CD8-positive, alpha-beta T cell (primary cell): ENCODE measurements at regions of chr6 and their contacts with region 1.

Region 1: GRCh38 chr6:33391278-33391921 is at the start of gene KIFC1:
- DNase-seq: peak; percentile 98 to 100 (median 99)
- ATAC-seq: peak; percentile 87
- H3K4me3 ChIP-seq: peak within 1 kb of the TSS; percentile 57 to 61
- H3K4me3 Mint-ChIP-seq: peak within 1 kb of the TSS; percentile 85
- H3K27ac ChIP-seq: peak within 1 kb of the TSS; percentile 68 to 88
- H3K27ac Mint-ChIP-seq: peak within 1 kb of the TSS; percentile 97
- H3K4me1 ChIP-seq: peaks cover 18% of the 10 kb centered on the region
- H3K4me1 Mint-ChIP-seq: peaks cover 25% of the 10 kb centered on the region
- H3K27me3 ChIP-seq: no peaks in the 10 kb centered on the region
- H3K27me3 Mint-ChIP-seq: no peaks in the 10 kb centered on the region
- CTCF ChIP-seq: peak; percentile 86
- total RNA-seq, gene KIFC1: 1.6 to 2.1 TPM

Region 2: GRCh38 chr6:33271458-33272274 is 119.7 kb before region 1 on chr6 and contains the starts of genes RPS18 and VPS52:
- CTCF ChIA-PET with region 1: no interaction called
- POLR2A ChIA-PET with region 1: interaction called, 6 read pairs
- intact Hi-C with region 1: loop called (anchors 1 kb)
- DNase-seq: peak; percentile 82 to 99 (median 90)
- ATAC-seq: peak; percentile 85
- H3K4me3 ChIP-seq: peak within 1 kb of the TSS; percentile 74 to 82
- H3K4me3 Mint-ChIP-seq: peak within 1 kb of the TSS; percentile 100
- H3K27ac ChIP-seq: peak within 1 kb of the TSS; percentile 87 to 95
- H3K27ac Mint-ChIP-seq: peak within 1 kb of the TSS; percentile 100
- H3K4me1 ChIP-seq: peaks cover 44% of the 10 kb centered on the region
- H3K4me1 Mint-ChIP-seq: peaks cover 62% of the 10 kb centered on the region
- H3K27me3 ChIP-seq: no peaks in the 10 kb centered on the region
- H3K27me3 Mint-ChIP-seq: no peaks in the 10 kb centered on the region
- CTCF ChIP-seq: no peak
- total RNA-seq, gene RPS18: 4,154 to 4,290 TPM
- total RNA-seq, gene VPS52: 72.2 to 75.9 TPM

Region 3: DNA sequence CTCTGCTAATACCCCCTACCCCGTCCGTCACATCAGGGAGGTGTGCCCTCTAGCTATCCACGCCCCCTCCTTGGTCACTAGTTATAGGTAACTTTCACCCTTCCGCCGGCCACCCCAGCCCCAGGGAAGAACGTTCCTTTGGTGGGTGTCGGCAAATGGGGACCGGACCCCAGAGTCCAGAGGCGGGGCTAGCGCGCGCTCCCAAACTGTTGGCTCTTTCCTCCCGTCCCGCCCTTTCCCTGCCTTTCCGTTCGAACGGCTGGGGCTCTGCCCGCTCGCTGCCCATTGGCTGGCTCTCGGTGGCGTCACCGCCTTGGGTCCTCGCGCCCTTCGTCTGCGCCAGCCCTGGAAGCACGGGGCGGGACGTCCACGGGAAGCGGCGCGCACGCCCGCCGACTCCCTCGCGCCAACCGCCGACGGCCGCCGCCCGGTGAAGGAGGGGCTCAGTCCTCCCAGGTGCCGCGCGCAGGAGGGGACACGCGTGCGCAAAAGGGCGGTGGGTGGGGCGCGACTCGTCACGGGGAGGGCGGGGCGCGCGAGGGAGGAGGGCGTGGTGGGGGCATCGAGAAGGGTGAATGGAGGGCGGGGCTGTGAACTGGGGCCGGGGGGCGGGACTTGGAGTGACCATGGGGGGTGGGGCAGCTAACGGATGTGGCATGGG is 18.8 kb after region 1 on chr6:
- CTCF ChIA-PET with region 1: interaction called, 6 read pairs
- POLR2A ChIA-PET with region 1: no interaction called
- intact Hi-C with region 1: loop called (anchors 1 kb)
- DNase-seq: peak; percentile 93 to 99 (median 99)
- ATAC-seq: peak; percentile 68
- H3K4me3 ChIP-seq: peak overlapping the region; percentile 82 to 95
- H3K4me3 Mint-ChIP-seq: peak overlapping the region; percentile 88
- H3K27ac ChIP-seq: peak overlapping the region; percentile 94 to 96
- H3K27ac Mint-ChIP-seq: peak overlapping the region; percentile 91
- H3K4me1 ChIP-seq: peaks cover 40% of the 10 kb centered on the region
- H3K4me1 Mint-ChIP-seq: peaks cover 47% of the 10 kb centered on the region
- H3K27me3 ChIP-seq: no peaks in the 10 kb centered on the region
- H3K27me3 Mint-ChIP-seq: no peaks in the 10 kb centered on the region
- CTCF ChIP-seq: no peak

Region 4: GRCh38 chr6:33454009-33454946 is 62.9 kb after region 1 on chr6 and contains the start of gene ZBTB9:
- CTCF ChIA-PET with region 1: interaction called, 7 read pairs
- POLR2A ChIA-PET with region 1: interaction called, 3 read pairs
- intact Hi-C with region 1: loop called (anchors 1 kb)
- DNase-seq: peak; percentile 86 to 96 (median 93)
- ATAC-seq: peak; percentile 98
- H3K4me3 ChIP-seq: peak within 1 kb of the TSS; percentile 92 to 93
- H3K4me3 Mint-ChIP-seq: peak within 1 kb of the TSS; percentile 98
- H3K27ac ChIP-seq: peak within 1 kb of the TSS; percentile 75 to 81
- H3K27ac Mint-ChIP-seq: peak within 1 kb of the TSS; percentile 97
- H3K4me1 ChIP-seq: peaks cover 23% of the 10 kb centered on the region
- H3K4me1 Mint-ChIP-seq: peaks cover 43% of the 10 kb centered on the region
- H3K27me3 ChIP-seq: no peaks in the 10 kb centered on the region
- H3K27me3 Mint-ChIP-seq: no peaks in the 10 kb centered on the region
- CTCF ChIP-seq: no peak
- total RNA-seq, gene ZBTB9: 7.1 to 9.5 TPM

Region 5: DNA sequence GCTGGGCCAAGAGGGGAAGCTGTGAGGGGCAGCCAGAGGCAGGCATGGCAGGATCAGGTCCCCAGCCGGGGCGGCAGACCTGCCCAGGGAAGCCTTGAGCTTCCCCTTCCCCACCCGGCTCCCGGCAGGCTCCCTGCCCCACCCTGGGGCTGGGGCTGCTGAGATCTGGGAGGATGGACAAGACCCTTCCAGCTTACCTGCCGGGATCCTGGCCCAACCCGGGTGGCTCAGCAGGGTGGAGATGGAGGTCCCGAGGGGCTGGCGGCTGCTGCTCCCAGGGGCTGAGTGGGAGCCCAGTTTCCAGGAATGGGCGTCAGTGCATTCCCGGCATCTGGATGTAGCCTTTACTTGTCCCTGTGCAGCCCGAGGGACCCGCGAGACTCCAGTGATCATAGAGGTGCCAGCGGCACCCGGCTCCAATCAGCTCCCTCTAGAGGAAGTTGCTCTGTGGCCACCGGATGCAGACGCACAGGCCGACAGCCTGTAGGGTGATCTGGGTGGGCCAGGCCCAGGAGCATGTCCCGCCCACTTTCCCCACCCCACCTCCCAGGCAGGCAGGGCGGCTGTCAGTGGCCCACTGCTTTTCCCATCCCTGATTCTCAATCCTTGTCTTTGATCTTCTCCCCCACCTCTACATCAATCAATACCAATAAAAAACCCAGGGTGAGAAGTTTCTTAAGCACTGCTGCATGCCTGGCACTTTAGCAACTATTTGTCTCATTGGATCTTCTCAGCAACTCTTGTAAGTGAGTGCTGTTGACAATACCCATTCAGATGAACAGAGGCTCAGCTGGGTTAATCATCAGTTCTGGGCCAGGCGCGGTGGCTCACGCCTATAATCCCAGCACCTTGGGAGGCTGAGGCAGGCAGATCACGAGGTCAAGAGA is 188.7 kb after region 1 on chr6 and contains the start of gene BAK1:
- CTCF ChIA-PET with region 1: no interaction called
- POLR2A ChIA-PET with region 1: no interaction called
- intact Hi-C with region 1: loop called (anchors 1 kb)
- DNase-seq: peak; percentile 59 to 94 (median 85)
- ATAC-seq: peak; percentile 94
- H3K4me3 ChIP-seq: peak within 1 kb of the TSS; percentile 97 to 98
- H3K4me3 Mint-ChIP-seq: peak within 1 kb of the TSS; percentile 93
- H3K27ac ChIP-seq: peak within 1 kb of the TSS; percentile 85 to 87
- H3K27ac Mint-ChIP-seq: peak within 1 kb of the TSS; percentile 98
- H3K4me1 ChIP-seq: peaks cover 29% of the 10 kb centered on the region
- H3K4me1 Mint-ChIP-seq: peaks cover 31% of the 10 kb centered on the region
- H3K27me3 ChIP-seq: no peaks in the 10 kb centered on the region
- H3K27me3 Mint-ChIP-seq: no peaks in the 10 kb centered on the region
- CTCF ChIP-seq: peak; percentile 44
- total RNA-seq, gene BAK1: 44.8 to 46.5 TPM

Region 6: DNA sequence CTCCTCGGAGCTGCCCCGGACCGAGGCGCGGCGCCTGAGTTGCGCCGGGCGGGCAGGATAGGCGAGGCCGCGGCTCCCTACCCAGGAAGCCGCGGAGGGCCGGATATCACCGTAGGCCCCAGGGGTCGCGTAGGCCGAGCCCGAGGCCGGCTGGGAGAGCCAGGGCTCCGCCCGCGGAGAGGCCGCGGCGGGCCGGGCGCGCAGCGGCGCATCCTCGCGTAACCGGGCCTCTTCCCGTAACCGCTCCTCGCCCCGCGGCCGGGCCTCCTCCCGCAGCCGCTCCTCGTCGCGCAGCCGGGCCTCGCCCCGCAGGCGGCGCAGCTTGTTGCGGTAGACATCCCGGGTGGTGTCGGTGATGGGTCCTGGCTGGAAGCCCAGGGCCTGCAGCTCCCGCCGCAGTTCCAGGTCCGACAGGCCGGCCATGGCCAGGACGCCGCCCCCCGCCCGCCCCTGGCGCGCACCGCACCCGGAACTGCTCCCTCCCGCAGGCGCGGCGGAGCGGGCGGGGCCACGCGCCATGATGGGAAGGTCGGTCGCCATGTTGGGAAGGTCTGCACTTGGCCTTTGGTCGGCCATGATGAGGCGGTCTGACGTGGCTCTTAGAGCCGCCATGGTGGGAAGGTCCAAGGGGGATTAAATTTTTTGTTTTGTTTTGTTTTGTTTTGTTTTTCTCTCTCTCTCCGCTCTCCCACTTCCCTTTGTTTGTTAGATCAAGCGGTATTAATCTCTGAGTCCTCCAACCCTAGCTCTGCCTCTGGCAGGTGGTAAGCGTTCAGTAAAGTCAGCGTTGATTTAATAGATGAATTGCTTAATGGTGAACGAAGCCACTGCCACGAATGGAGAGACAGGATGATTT is 397.5 kb after region 1 on chr6 and contains the start of gene LEMD2:
- CTCF ChIA-PET with region 1: no interaction called
- POLR2A ChIA-PET with region 1: no interaction called
- intact Hi-C with region 1: loop called in 1 of 2 experiments (anchors 2 kb)
- DNase-seq: peak; percentile 88 to 95 (median 93)
- ATAC-seq: peak; percentile 91
- H3K4me3 ChIP-seq: peak within 1 kb of the TSS; percentile 55 to 90
- H3K4me3 Mint-ChIP-seq: peak within 1 kb of the TSS; percentile 97
- H3K27ac ChIP-seq: peak within 1 kb of the TSS; percentile 87 to 90
- H3K27ac Mint-ChIP-seq: peak within 1 kb of the TSS; percentile 99
- H3K4me1 ChIP-seq: peaks cover 41% of the 10 kb centered on the region
- H3K4me1 Mint-ChIP-seq: peaks cover 51% of the 10 kb centered on the region
- H3K27me3 ChIP-seq: no peaks in the 10 kb centered on the region
- H3K27me3 Mint-ChIP-seq: peaks cover 5% of the 10 kb centered on the region
- CTCF ChIP-seq: no peak
- total RNA-seq, gene LEMD2: 124 TPM

Region 7: DNA sequence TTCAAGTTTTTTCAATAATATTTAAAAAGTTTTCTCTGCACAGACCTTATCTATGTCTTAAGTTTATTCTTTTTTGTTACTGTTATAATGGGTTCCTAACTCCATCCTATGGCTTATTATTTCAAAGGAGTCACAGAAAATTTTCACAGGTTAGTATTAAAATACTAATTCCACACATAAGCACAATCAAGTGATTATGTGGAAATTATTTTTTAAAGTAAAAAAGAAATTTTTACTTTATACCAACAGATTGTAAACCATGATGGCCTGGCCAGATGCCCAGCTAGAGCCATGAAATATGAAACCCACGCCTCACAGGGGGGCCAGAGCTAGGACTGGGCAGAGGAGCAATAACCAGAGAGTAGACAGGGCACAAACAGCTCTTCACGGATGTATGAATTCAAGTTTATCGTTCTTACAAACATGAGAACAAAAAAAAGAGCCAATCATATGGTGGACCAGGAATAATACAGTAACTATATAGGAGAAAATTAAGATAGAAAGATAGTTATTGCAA is 967.0 kb after region 1 on chr6:
- CTCF ChIA-PET with region 1: no interaction called
- POLR2A ChIA-PET with region 1: no interaction called
- intact Hi-C with region 1: no loop called
- DNase-seq: no peak
- ATAC-seq: no peak
- H3K4me3 ChIP-seq: no peak overlapping the region
- H3K4me3 Mint-ChIP-seq: no peak overlapping the region
- H3K27ac ChIP-seq: no peak overlapping the region
- H3K27ac Mint-ChIP-seq: no peak overlapping the region
- H3K4me1 ChIP-seq: no peaks in the 10 kb centered on the region
- H3K4me1 Mint-ChIP-seq: peaks cover 34% of the 10 kb centered on the region
- H3K27me3 ChIP-seq: no peaks in the 10 kb centered on the region
- H3K27me3 Mint-ChIP-seq: no peaks in the 10 kb centered on the region
- CTCF ChIP-seq: no peak